Calu3 (cell line): ENCODE measurements at regions of chr1 and their contacts with region 1.

Region 1: GRCh38 chr1:152001391-152002249 is 8.0 kb upstream of the S100A10 start:
- DNase-seq: peak; percentile 91
- H3K4me3 Mint-ChIP-seq: no peak overlapping the region
- H3K27ac Mint-ChIP-seq: peak overlapping the region; percentile 44
- H3K4me1 Mint-ChIP-seq: peaks cover 76% of the 10 kb centered on the region
- H3K27me3 Mint-ChIP-seq: no peaks in the 10 kb centered on the region
- CTCF ChIP-seq: peak; percentile 93

Region 2: GRCh38 chr1:151888972-151889570 is 112.5 kb before region 1 on chr1:
- CTCF ChIA-PET with region 1: interaction called, 4 read pairs
- intact Hi-C with region 1: loop called (anchors 1 kb)
- DNase-seq: no peak
- H3K4me3 Mint-ChIP-seq: no peak overlapping the region
- H3K27ac Mint-ChIP-seq: no peak overlapping the region
- H3K4me1 Mint-ChIP-seq: no peaks in the 10 kb centered on the region
- H3K27me3 Mint-ChIP-seq: no peaks in the 10 kb centered on the region
- CTCF ChIP-seq: peak; percentile 58

Region 3: GRCh38 chr1:151934048-151934493 is 67.5 kb before region 1 on chr1:
- CTCF ChIA-PET with region 1: interaction called, 90 read pairs
- intact Hi-C with region 1: loop called (anchors 1 kb)
- DNase-seq: peak; percentile 76
- H3K4me3 Mint-ChIP-seq: no peak overlapping the region
- H3K27ac Mint-ChIP-seq: no peak overlapping the region
- H3K4me1 Mint-ChIP-seq: peaks cover 28% of the 10 kb centered on the region
- H3K27me3 Mint-ChIP-seq: no peaks in the 10 kb centered on the region
- CTCF ChIP-seq: peak; percentile 79

Region 4: DNA sequence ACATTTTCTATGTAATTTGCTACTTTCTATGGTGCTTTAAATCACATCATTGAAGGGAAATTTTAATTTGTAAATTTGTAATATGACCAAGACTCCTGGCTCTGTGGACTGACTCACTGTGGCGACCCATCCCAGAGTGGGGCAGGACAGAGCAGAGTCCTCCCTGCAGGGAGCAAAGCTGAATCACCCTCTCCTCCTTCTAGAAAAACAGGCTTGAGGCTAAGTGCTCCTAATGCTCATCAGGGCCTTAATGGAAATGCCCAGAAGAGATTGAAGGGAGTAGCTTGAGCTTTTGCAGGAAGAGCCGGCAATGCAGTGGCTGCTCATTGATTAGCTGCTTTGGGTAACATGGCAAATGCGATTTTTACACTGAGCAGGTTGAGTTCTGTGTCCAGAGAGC is 24.8 kb before region 1 on chr1:
- CTCF ChIA-PET with region 1: interaction called, 23 read pairs
- intact Hi-C with region 1: no loop called
- DNase-seq: peak; percentile 55
- H3K4me3 Mint-ChIP-seq: no peak overlapping the region
- H3K27ac Mint-ChIP-seq: peak overlapping the region; percentile 62
- H3K4me1 Mint-ChIP-seq: peaks cover 84% of the 10 kb centered on the region
- H3K27me3 Mint-ChIP-seq: no peaks in the 10 kb centered on the region
- CTCF ChIP-seq: no peak

Region 5: DNA sequence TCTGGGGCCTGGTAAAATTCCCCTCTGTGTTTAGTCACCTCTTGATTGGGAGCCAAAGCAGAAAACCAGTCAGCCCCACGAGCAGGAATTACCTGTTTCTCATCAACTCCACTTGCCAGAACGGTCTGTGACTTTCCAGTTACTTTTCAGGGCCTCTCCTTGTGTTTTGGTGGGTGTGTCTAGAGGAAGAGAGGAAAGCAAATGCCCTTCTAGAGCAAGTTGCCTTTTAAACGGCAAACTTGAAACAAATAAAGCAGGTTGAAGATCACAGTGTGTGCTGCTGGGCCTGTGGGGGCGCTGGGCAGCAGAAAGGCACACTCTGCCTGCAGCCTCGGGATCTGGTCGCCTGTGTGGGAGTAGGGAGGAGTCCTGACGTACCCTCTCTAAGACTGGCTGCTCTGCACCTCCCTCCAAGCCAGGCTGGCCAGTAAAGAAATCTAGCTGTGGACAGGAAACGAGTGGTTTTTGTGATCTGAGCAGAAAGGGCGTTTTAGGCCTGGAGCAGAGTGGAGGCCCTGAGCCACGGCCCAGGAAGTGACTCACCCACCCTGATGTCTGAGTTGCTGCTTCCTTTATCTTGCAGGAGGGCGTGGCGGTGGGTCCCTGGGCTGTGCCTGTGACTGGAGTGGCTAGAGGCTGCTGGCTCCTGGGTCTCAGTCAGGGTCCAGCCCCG is 46.2 kb after region 1 on chr1:
- CTCF ChIA-PET with region 1: interaction called, 11 read pairs
- intact Hi-C with region 1: no loop called
- DNase-seq: peak; percentile 96
- H3K4me3 Mint-ChIP-seq: peak overlapping the region; percentile 48
- H3K27ac Mint-ChIP-seq: peak overlapping the region; percentile 84
- H3K4me1 Mint-ChIP-seq: peaks cover 41% of the 10 kb centered on the region
- H3K27me3 Mint-ChIP-seq: peaks cover 4% of the 10 kb centered on the region
- CTCF ChIP-seq: no peak

Region 6: GRCh38 chr1:152842556-152842955 is 840.9 kb after region 1 on chr1 and contains the start of gene LCE6A:
- CTCF ChIA-PET with region 1: no interaction called
- intact Hi-C with region 1: no loop called
- DNase-seq: no peak
- H3K4me3 Mint-ChIP-seq: no peak within 1 kb of the TSS
- H3K27ac Mint-ChIP-seq: no peak within 1 kb of the TSS
- H3K4me1 Mint-ChIP-seq: no peaks in the 10 kb centered on the region
- H3K27me3 Mint-ChIP-seq: peaks cover 59% of the 10 kb centered on the region
- CTCF ChIP-seq: no peak
- total RNA-seq, gene LCE6A: not detected in 2 replicates